Psoas muscle (tissue), 8 donors: ENCODE measurements at regions of chr13 and their contacts with region 1.

Region 1: GRCh38 chr13:27728271-27728670 is 64.0 kb upstream of the GSX1 start:
- DNase-seq: no peak
- ATAC-seq: no peak
- H3K4me3 ChIP-seq: no peak overlapping the region
- H3K27ac ChIP-seq: no peak overlapping the region
- H3K4me1 ChIP-seq: no peaks in the 10 kb centered on the region
- H3K27me3 ChIP-seq: peaks cover 0 to 5% (median 0%) of the 10 kb centered on the region in 3 donors
- CTCF ChIP-seq: no peak

Region 2: GRCh38 chr13:27379694-27380641 is 348.3 kb before region 1 on chr13:
- intact Hi-C with region 1: loop called in 1 of 2 experiments (anchors 5 kb)
- DNase-seq: peak; percentile 46 to 76
- ATAC-seq: peak; percentile 44 to 84 (median 74)
- H3K4me3 ChIP-seq: no peak overlapping the region
- H3K27ac ChIP-seq: no peak overlapping the region
- H3K4me1 ChIP-seq: no peaks in the 10 kb centered on the region
- H3K27me3 ChIP-seq: peaks cover 0 to 3% (median 0%) of the 10 kb centered on the region in 3 donors
- CTCF ChIP-seq: peak; percentile 34

Region 3: DNA sequence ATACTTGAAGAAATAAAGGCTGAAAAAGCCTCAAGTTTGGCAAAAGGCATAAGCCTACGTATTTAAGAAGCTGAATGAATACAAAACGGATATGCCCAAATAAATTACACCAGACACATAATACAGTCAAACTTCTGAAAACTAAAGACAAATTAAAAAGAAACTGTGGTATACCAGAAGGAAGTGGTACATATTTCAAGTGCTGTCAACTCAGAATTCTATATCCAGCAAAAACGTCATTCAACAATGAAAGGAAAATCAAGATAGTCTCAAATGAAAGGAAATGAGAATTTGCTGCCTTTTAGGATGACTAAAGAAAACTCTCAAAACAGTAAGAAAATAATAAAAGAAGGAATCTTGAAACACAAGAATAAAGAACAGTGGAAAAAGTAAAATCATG is 37.1 kb before region 1 on chr13:
- intact Hi-C with region 1: no loop called
- DNase-seq: no peak
- ATAC-seq: no peak
- H3K4me3 ChIP-seq: no peak overlapping the region
- H3K27ac ChIP-seq: no peak overlapping the region
- H3K4me1 ChIP-seq: no peaks in the 10 kb centered on the region
- H3K27me3 ChIP-seq: no peaks in the 10 kb centered on the region
- CTCF ChIP-seq: no peak